ENCODE measurements at regions of chr2 and their contacts with region 1.

Region 1: DNA sequence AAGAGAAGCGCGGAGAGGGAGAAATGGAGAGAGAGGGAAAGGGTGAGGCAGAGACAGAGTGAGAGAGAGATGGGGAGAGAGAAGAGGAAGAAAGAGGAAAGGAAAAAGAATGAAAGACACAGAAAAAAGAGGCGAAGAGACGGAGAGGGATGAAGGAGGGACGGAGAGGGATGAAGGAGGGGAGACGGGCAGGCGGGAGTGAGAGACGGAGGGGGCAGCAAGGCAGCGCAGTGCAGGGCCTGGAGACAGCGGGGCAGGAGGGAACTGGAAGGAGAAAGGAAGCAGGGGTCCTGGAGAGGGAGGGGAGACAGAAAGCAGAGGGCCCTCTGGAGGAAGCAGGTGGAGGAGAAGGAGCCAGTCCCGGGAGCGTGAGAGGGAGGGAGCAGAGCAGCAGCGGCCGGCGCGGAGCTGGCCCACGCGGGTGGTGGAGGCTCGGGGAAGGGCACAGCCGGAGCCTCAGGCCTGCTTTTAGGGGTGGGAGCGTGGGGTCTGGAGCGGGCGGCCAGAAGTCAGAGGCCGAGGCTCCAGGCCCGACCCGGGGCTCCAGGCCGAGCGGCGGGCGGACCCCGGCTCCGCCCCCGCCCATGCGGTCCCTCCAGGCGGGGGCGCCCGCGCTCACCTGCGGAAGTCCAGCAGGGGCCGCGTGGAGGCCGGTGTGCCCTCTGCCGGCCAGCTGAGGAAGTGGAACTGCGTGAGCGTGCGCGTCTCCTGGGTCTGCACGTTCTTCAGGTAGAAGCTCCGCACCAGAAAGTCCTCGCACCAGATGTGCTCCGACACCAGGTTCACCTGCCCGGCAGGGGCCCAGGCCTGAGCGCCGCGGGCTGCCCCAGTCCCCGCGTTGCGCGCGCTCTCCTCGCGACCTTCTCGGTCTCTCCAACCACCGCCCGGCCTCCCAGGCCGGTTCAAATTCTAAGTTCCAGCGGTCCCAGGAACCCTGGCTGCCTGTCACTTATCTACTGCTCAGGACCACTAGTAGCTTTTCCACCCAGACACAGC is 14.5 kb downstream of the PTPRN start:
- DNase-seq: peak; percentile 82 to 87
- H3K4me3 ChIP-seq: peak overlapping the region; percentile 55 to 61
- H3K27ac ChIP-seq: peak overlapping the region; percentile 78 to 86
- H3K4me1 ChIP-seq: peaks cover 0 to 29% (median 14%) of the 10 kb centered on the region in 4 donors
- H3K27me3 ChIP-seq: peaks cover 0 to 12% of the 10 kb centered on the region in 2 donors
- CTCF ChIP-seq: peak; percentile 99 to 100

Region 2: GRCh38 chr2:219160186-219161017 is 134.3 kb before region 1 on chr2 and contains the start of gene NHEJ1:
- intact Hi-C with region 1: loop called (anchors 1 kb)
- DNase-seq: peak; percentile 99
- H3K4me3 ChIP-seq: peak within 1 kb of the TSS; percentile 66 to 84
- H3K27ac ChIP-seq: peak within 1 kb of the TSS; percentile 91 to 92
- H3K4me1 ChIP-seq: peaks cover 0 to 12% (median 10%) of the 10 kb centered on the region in 4 donors
- H3K27me3 ChIP-seq: no peaks in the 10 kb centered on the region
- CTCF ChIP-seq: peak; percentile 97 to 100

Region 3: DNA sequence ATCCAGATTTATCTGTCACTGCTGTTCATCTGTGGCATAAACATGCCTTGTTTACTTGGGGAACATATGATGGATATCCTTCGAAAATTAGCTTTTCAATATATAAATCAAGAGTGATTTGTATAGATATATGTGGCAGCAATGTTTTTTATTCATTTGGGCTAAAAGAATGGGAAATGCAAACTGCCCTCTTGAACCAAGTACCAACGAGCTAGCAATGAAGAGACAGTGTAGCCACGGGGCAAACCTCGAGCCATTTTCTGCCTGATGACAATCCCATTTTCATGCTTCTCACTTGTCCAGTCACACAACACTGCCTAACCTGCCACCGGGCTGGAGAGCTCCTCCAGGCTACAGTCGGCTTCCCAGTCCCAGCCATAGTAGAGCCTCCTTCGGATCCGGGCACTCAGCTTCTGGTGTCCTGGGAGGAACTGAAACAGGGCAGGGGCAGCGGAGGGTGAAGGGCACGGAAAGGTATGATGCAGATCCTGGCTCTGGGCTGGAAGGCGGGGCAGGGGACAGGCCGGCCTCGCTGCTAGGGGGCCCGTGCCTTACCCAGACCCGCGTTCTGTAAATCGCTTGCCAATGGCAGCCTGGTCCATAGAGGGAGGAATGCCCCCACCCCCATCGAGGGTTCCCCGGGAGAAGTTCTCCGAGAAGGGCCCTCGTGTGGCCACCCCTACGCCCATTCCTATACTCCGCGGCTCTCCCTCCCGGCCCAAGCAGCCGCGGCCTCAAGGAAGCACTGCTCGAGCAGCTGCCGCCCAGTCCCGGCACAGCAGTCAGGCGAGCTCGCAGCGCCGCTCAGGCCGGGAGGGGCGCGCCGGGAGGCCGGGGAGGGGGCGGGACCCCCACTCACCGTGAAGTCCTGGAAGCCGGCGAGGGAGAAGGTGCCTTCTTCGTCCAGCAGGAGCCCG is 118.5 kb before region 1 on chr2:
- intact Hi-C with region 1: no loop called
- DNase-seq: peak; percentile 69 to 79
- H3K4me3 ChIP-seq: peak overlapping the region; percentile 87 to 90
- H3K27ac ChIP-seq: peak overlapping the region; percentile 98
- H3K4me1 ChIP-seq: peaks cover 4 to 40% (median 37%) of the 10 kb centered on the region in 4 donors
- H3K27me3 ChIP-seq: no peaks in the 10 kb centered on the region
- CTCF ChIP-seq: no peak

Region 4: GRCh38 chr2:219229305-219230058 is 65.2 kb before region 1 on chr2 and contains the starts of genes ANKZF1 and ATG9A:
- intact Hi-C with region 1: loop called (anchors 10 kb)
- DNase-seq: peak; percentile 99 to 100
- H3K4me3 ChIP-seq: peak within 1 kb of the TSS; percentile 62 to 77
- H3K27ac ChIP-seq: peak within 1 kb of the TSS; percentile 93 to 96
- H3K4me1 ChIP-seq: peaks cover 5 to 44% (median 26%) of the 10 kb centered on the region in 4 donors
- H3K27me3 ChIP-seq: no peaks in the 10 kb centered on the region
- CTCF ChIP-seq: peak in 1 of 2 experiments; percentile 32

Region 5: DNA sequence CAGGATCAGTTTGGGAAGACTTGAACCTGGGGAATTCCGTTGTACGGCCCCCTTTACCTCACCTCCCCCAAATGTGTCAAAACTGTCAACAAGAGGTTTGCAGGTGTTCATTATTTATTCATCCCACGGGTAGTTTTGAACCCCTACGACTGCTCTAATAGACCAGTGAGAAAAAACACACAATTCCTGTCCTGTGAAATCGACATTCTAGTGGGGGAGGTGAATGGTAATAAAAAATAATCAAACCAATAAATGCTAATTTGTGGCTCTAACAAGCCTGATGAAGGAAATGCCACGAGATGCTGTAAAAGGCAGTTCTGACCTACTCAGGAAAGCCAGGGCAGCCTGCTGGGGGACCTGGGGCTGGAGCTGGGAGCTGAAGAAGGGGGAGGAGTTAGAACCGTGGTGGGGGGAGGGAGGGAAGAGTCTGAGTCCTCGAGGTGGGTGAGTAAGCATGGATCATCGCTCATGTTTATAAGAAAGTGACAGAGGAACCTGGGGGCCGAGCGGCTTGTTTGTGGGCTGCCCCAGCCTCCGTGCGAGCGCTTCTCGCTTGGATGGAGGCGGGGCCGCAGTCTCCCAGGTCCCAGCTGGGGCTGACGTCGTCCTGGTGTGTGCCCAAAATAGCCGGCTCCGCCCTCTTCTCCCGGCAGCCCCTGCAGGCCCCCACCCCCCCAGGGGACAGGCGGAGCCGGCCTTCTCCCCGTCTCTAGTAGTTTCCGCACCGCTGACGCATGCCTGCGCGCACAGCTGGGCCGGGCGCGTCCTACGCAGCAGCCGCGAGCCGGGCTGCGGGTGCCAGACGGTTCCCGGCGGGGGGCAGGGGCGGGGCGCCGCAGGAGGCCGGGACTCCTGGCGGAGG is 15.8 kb before region 1 on chr2 and contains the start of gene DNAJB2:
- intact Hi-C with region 1: loop called (anchors 2 kb)
- DNase-seq: peak; percentile 99 to 100
- H3K4me3 ChIP-seq: peak within 1 kb of the TSS; percentile 80 to 94
- H3K27ac ChIP-seq: peak within 1 kb of the TSS; percentile 98 to 99
- H3K4me1 ChIP-seq: peaks cover 0 to 50% (median 40%) of the 10 kb centered on the region in 4 donors
- H3K27me3 ChIP-seq: no peaks in the 10 kb centered on the region
- CTCF ChIP-seq: no peak

Region 6: DNA sequence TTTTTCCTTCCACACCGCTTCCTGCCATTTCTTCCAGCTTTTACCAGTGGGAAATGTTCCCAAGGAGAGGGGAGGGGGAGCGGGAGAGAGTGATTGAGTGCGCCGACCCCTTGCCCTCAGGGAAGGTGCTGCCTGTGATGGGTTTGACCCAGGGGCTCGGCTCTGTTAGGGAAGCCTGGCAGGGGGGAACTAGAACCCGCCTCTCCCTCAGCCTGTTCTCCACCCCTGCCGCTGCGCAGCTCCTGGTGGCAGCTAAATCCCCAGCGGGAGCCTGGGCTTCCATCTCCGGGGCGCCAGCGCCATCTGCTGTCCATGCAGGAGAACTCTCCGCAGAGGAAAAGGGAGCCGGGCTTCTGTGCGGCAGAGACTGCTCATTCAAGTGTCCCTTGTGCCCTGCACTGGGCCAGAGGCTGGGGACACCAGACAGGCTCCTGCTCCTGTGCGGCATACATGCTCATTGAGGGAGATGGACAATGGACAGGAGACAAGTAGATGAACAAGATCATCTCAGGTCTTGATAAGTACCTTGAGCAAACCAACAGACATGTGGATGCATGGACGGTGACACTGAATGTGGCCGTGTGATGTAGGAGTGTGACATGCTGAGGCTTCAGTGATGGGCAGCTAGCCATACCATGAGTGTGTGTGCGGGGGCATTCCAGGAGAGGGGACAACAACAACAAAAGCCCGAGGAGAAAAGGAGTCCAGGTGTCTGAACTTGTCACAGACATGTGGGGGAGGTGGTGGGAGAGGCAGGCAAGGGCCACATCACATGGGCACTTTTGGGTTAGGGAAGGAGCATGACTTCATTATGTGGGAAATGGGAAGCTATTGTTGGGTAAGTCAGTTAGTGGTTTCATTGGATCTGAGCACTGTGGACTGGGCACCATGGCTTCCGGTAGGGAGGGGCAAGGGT is 235.7 kb after region 1 on chr2:
- intact Hi-C with region 1: loop called (anchors 10 kb)
- DNase-seq: peak; percentile 74 to 89
- H3K4me3 ChIP-seq: peak overlapping the region; percentile 21
- H3K27ac ChIP-seq: no peak overlapping the region
- H3K4me1 ChIP-seq: peaks cover 0 to 8% (median 2%) of the 10 kb centered on the region in 4 donors
- H3K27me3 ChIP-seq: peaks cover 0 to 22% of the 10 kb centered on the region in 2 donors
- CTCF ChIP-seq: peak; percentile 99